Psoas muscle (tissue), 8 donors: ENCODE measurements at regions of chr18 and their contacts with region 1.

Region 1: GRCh38 chr18:34787931-34788532 is 77.9 kb downstream of the DTNA start:
- DNase-seq: no peak
- ATAC-seq: peak; percentile 75 to 90 (median 81)
- H3K4me3 ChIP-seq: no peak overlapping the region
- H3K27ac ChIP-seq: no peak overlapping the region
- H3K4me1 ChIP-seq: no peaks in the 10 kb centered on the region
- H3K27me3 ChIP-seq: no peaks in the 10 kb centered on the region
- CTCF ChIP-seq: peak; percentile 80

Region 2: DNA sequence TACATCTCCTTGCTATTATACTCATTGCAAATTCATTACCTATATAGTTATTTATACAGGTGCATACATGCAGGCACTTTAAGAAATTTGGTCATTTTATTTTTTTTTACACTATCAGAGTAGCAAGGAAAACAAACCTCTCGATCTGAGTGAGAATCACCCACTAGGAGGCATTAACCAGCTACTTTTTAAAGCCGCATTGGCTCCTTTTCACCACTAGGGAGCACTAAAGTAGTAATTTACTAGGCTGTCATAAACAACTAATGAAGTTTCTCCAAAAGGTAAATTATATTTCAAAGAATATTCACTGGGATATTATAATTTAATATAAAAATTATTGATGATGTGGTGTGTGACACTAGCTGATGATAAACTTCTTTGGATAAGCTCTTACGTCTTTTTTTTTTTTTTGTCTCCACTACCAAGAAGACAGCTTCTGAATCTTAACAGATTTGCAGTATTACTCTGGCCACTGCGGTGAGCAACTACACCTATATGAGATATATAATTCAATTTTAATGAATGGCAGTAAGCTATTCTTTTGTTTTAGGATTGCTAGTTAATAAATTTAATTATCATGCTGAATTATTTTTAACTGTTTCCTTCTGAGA is 665.2 kb before region 1 on chr18:
- intact Hi-C with region 1: loop called (anchors 5 to 10 kb)
- DNase-seq: no peak
- ATAC-seq: peak in 3 of 4 donors; percentile 68 to 81 (median 74)
- H3K4me3 ChIP-seq: no peak overlapping the region
- H3K27ac ChIP-seq: no peak overlapping the region
- H3K4me1 ChIP-seq: no peaks in the 10 kb centered on the region
- H3K27me3 ChIP-seq: no peaks in the 10 kb centered on the region
- CTCF ChIP-seq: peak; percentile 88

Region 3: DNA sequence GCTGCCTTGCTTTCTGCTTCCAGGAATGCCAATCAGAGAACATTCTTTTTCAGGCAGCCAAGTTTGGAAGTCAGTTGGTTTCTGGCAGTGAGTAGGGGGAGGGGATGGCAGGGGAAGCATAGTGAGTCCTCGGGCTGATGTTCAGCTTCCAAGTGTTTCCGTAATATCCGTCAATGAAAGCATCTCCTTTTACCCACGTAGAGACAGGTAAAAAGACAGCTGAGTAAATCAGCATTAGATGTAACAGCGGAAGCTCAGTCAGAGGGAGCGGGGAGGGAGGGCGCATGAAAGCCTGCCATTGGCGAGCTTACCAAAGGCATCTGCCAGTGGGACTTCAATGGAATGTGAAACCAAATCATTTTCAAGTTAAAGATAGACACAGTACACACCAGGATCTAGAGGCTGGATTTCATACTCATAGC is 195.1 kb before region 1 on chr18:
- intact Hi-C with region 1: loop called (anchors 1 to 5 kb)
- DNase-seq: peak; percentile 72 to 85
- ATAC-seq: peak; percentile 85 to 95 (median 88)
- H3K4me3 ChIP-seq: peak overlapping the region; percentile 59
- H3K27ac ChIP-seq: peak overlapping the region; percentile 83
- H3K4me1 ChIP-seq: peaks cover 25% of the 10 kb centered on the region
- H3K27me3 ChIP-seq: no peaks in the 10 kb centered on the region
- CTCF ChIP-seq: no peak

Region 4: GRCh38 chr18:34661464-34662111 is 126.4 kb before region 1 on chr18:
- intact Hi-C with region 1: loop called (anchors 2 to 5 kb)
- DNase-seq: no peak
- ATAC-seq: peak; percentile 54 to 72 (median 68)
- H3K4me3 ChIP-seq: no peak overlapping the region
- H3K27ac ChIP-seq: no peak overlapping the region
- H3K4me1 ChIP-seq: peaks cover 42% of the 10 kb centered on the region
- H3K27me3 ChIP-seq: no peaks in the 10 kb centered on the region
- CTCF ChIP-seq: peak; percentile 77

Region 5: DNA sequence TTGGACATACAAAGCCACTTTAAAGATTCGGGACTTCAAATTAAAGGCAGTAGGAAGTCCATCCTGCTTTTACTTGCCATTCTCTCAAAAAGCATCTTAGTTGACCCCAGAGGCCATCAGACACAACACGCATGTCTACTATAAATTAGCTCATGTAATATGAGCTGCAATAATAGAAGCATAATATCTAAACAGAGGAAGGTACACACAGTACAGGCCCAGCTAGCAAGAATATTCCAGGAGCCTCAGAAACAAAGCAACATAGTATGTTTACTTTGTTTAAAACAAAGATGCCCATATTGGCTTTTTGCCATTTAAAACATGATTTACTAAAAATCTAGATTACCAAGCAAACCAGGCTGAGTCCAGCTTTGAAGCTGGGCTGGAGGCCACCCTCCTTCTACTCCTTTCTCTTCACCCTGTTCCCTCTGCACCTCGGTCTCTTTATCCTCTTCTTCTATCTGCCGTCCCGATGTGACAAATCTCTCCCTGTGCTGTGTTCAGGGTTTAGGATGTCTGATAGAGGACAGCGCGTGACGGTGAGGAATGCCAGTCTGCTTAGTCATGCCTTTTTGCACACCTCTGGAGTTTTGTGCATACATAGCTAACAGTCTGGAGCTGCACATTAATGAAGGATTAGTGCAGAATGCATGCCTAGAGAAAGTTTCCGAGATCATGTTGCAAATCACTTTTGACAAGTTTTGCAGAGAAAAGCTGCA is 49.7 kb before region 1 on chr18:
- intact Hi-C with region 1: loop called in 1 of 2 experiments (anchors 10 kb)
- DNase-seq: no peak
- ATAC-seq: peak; percentile 81 to 90 (median 84)
- H3K4me3 ChIP-seq: peak overlapping the region; percentile 26
- H3K27ac ChIP-seq: peak overlapping the region; percentile 51
- H3K4me1 ChIP-seq: peaks cover 38% of the 10 kb centered on the region
- H3K27me3 ChIP-seq: no peaks in the 10 kb centered on the region
- CTCF ChIP-seq: no peak